ENCODE measurements at regions of chr4 and their contacts with region 1.

Region 1: DNA sequence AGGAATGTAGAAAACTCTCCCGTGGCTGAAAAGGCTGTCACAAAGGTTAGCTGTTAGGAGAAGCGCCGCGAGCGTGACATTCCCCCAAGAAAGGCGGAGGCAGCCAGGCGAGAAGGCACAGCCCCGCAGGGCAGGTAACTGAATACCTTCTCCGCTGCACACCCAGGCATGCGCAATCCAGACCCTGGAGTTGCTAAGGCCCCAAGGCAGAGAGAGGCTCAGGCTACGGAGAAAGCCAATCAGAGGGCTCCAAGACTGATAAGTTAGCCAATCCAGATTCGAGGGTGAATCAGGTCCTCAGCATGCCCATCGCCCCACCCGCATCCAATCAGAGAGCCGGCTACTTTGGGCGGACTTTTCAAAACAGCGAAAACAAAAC is 485 bp upstream of the CCNG2 start:
- DNase-seq: peak; percentile 99
- H3K4me3 ChIP-seq: peak overlapping the region; percentile 87 to 98
- H3K4me3 Mint-ChIP-seq: peak overlapping the region; percentile 92 to 100 (median 98)
- H3K27ac ChIP-seq: peak overlapping the region; percentile 77
- H3K27ac Mint-ChIP-seq: peak overlapping the region; percentile 97 to 99 (median 98)
- H3K4me1 ChIP-seq: peaks cover 35% of the 10 kb centered on the region
- H3K4me1 Mint-ChIP-seq: peaks cover 16 to 54% (median 24%) of the 10 kb centered on the region in 4 donors
- H3K27me3 ChIP-seq: no peaks in the 10 kb centered on the region
- H3K27me3 Mint-ChIP-seq: peaks cover 0 to 6% of the 10 kb centered on the region in 2 donors

Region 2: DNA sequence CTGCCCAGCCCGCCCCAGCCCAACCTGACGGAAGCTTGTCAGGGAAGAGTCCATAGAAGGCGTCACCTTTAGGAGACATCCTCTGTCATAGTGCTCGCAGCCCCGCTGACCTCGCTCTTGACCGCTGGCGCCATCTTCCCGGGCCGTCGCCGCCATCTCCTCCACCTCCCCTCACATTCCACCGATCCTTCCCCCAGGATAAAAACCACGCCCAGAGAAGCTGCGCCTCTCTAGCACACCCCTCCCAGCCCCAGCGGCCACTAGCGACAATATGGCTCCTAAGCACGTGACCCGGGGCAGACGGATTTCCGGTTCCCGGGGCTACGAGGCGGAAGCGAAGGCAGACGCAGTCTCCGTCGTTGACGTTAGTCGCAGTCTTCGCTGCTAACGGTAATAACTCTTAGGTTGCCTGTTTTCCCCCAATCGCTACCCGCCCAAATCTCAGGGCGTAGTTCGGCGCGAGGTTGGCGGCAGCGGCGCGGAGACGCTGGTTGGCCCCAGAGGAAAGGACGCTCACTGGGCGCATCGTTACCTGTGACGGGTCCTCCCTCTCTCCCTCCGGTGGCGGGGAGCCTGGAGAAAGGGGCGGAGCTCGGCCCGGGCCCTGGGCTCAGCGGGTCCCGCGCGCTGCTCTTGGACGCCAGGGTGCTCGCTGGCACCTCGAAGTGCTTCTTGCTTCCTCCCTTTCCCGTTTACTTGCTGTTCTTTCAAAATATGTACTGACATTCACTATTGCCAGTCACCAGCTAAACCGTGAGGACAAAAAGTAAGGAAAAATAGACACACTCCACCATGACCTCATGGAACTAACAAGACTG is 1642.2 kb before region 1 on chr4 and contains the starts of genes RCHY1 and THAP6:
- CTCF ChIA-PET with region 1: no interaction called
- POLR2A ChIA-PET with region 1: interaction called, 3 read pairs
- intact Hi-C with region 1: loop called (anchors 2 kb)
- DNase-seq: peak; percentile 92 to 96 (median 94)
- H3K4me3 ChIP-seq: peak within 1 kb of the TSS; percentile 68 to 99
- H3K4me3 Mint-ChIP-seq: no peak within 1 kb of the TSS
- H3K27ac ChIP-seq: peak within 1 kb of the TSS; percentile 97
- H3K27ac Mint-ChIP-seq: peak within 1 kb of the TSS in 3 of 7 donors; percentile 99 to 100 (median 100)
- H3K4me1 ChIP-seq: peaks cover 74% of the 10 kb centered on the region
- H3K4me1 Mint-ChIP-seq: peaks cover 35 to 51% (median 38%) of the 10 kb centered on the region in 4 donors
- H3K27me3 ChIP-seq: no peaks in the 10 kb centered on the region
- H3K27me3 Mint-ChIP-seq: no peaks in the 10 kb centered on the region
- total RNA-seq, gene RCHY1: 36.6 to 40.9 TPM
- total RNA-seq, gene THAP6: 38.1 to 43.4 TPM

Region 3: GRCh38 chr4:75800972-75801371 is 1355.5 kb before region 1 on chr4:
- CTCF ChIA-PET with region 1: no interaction called
- POLR2A ChIA-PET with region 1: no interaction called
- intact Hi-C with region 1: no loop called
- DNase-seq: no peak
- H3K4me3 ChIP-seq: no peak overlapping the region
- H3K4me3 Mint-ChIP-seq: no peak overlapping the region
- H3K27ac ChIP-seq: no peak overlapping the region
- H3K27ac Mint-ChIP-seq: no peak overlapping the region
- H3K4me1 ChIP-seq: no peaks in the 10 kb centered on the region
- H3K4me1 Mint-ChIP-seq: no peaks in the 10 kb centered on the region
- H3K27me3 ChIP-seq: no peaks in the 10 kb centered on the region
- H3K27me3 Mint-ChIP-seq: no peaks in the 10 kb centered on the region

Region 4: DNA sequence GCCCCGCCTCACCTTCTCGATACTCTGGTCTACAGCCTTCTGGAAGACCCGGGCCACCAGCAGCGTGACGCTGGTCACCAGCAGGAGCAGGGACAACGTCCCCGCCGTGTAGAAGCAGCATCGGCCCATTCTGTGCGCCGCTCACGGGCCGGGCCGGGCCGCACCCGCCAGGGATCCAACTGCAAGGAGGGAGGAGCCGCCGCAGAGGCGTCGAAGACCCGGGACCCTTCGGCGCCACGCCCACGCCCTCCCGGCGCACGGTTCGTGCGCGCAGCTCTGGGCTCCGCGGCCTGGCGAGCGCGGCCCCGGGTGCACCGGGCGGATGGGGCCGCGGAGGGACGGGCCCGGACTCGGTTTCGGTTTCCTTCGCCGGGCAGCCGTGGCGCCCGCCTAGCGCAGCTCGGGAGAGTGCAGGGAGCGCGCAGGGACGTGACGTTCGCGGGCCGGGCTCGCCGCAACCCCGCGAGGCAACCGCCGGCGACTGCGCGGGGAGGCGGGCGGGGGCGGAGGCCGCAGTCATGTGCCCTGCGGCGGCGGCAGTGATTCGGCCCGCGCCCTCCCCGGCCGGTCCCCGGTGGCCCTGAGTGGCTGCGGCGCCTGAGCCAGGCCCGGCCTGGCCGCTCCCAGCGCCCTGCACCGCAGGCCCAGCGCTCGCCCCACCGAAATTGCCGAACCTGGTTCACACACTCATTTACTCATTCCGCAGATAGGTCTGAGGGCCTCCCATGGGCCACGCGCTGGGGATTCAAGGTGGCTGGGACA is 942.9 kb before region 1 on chr4 and contains the start of gene SCARB2:
- CTCF ChIA-PET with region 1: no interaction called
- POLR2A ChIA-PET with region 1: no interaction called
- intact Hi-C with region 1: loop called (anchors 2 kb)
- DNase-seq: peak; percentile 79 to 88 (median 83)
- H3K4me3 ChIP-seq: peak within 1 kb of the TSS; percentile 77 to 90
- H3K4me3 Mint-ChIP-seq: peak within 1 kb of the TSS; percentile 89 to 97 (median 96)
- H3K27ac ChIP-seq: peak within 1 kb of the TSS; percentile 84
- H3K27ac Mint-ChIP-seq: peak within 1 kb of the TSS; percentile 92 to 98 (median 98)
- H3K4me1 ChIP-seq: peaks cover 43% of the 10 kb centered on the region
- H3K4me1 Mint-ChIP-seq: peaks cover 39 to 72% (median 48%) of the 10 kb centered on the region in 4 donors
- H3K27me3 ChIP-seq: no peaks in the 10 kb centered on the region
- H3K27me3 Mint-ChIP-seq: no peaks in the 10 kb centered on the region
- total RNA-seq, gene SCARB2: 23.3 to 23.5 TPM

Region 5: DNA sequence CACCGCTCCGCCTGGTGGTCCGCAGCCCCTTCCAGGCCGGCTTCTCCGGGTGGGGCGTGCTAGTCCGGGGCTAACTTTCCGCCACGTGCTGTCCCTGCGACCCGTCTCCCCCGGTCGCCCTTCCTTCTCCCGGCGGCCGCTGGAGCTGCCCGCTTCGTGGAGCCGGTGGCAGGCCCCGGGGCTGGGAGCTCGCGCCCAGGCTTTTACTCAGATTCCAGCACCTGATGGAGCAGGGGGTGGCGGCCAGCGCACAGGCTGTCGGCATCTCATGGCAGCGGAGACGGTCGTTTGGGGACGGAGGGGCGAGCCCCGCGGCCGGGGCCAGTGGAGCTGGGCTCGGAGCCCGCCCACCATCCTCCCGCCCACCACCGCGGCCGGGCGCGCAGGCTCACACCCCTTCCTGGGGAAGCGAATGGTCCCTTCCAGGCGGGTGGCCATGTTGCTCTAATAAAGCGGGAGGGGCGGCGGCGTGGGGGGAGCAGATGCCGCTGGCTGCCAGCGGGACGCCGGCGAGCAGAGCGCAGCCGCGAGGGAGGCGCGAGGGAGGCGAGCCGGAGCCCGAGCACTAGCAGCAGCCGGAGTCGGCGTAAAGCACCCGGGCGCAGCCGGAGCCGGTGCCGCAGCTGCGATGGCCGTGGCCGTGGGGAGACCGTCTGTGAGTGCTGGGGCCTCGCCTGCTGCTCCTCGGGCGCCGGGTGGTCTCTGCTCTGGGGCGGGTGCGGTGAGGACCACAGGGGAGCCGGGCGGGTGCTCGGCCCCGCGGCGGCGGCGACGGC is 207.1 kb before region 1 on chr4 and contains the start of gene SEPTIN11:
- CTCF ChIA-PET with region 1: no interaction called
- POLR2A ChIA-PET with region 1: no interaction called
- intact Hi-C with region 1: loop called (anchors 1 kb)
- DNase-seq: peak; percentile 83 to 90 (median 85)
- H3K4me3 ChIP-seq: peak within 1 kb of the TSS; percentile 83 to 86
- H3K4me3 Mint-ChIP-seq: peak within 1 kb of the TSS; percentile 90 to 94 (median 93)
- H3K27ac ChIP-seq: peak within 1 kb of the TSS; percentile 59
- H3K27ac Mint-ChIP-seq: peak within 1 kb of the TSS; percentile 79 to 94 (median 91)
- H3K4me1 ChIP-seq: peaks cover 23% of the 10 kb centered on the region
- H3K4me1 Mint-ChIP-seq: peaks cover 8 to 41% (median 23%) of the 10 kb centered on the region in 4 donors
- H3K27me3 ChIP-seq: no peaks in the 10 kb centered on the region
- H3K27me3 Mint-ChIP-seq: no peaks in the 10 kb centered on the region
- total RNA-seq, gene SEPTIN11: 25.2 to 30.2 TPM

Region 6: DNA sequence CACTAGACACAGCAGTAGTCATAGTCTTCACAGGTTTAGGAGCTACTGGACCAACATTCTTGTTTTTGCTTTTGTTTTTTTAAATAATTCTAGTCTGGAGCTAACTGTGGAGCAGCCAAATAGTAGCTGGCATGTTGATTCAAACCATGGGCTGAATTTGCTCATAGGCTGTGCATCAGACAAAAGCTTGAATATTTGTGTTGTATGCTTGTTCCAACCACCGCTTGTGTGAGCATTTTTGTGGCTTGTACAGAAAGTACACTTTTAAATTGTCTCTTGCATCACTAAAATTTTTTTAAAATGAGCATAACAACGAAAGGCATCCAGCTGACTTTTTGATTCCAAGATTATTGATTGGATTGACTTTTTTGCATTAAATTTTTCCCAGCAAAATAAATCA is 120.3 kb before region 1 on chr4:
- CTCF ChIA-PET with region 1: no interaction called
- POLR2A ChIA-PET with region 1: no interaction called
- intact Hi-C with region 1: no loop called
- DNase-seq: no peak
- H3K4me3 ChIP-seq: no peak overlapping the region
- H3K4me3 Mint-ChIP-seq: no peak overlapping the region
- H3K27ac ChIP-seq: no peak overlapping the region
- H3K27ac Mint-ChIP-seq: no peak overlapping the region
- H3K4me1 ChIP-seq: peaks cover 14% of the 10 kb centered on the region
- H3K4me1 Mint-ChIP-seq: peaks cover 14 to 16% (median 15%) of the 10 kb centered on the region in 4 donors
- H3K27me3 ChIP-seq: no peaks in the 10 kb centered on the region
- H3K27me3 Mint-ChIP-seq: no peaks in the 10 kb centered on the region

Region 7: GRCh38 chr4:77095101-77095821 is 61.3 kb before region 1 on chr4:
- CTCF ChIA-PET with region 1: interaction called, 16 read pairs
- POLR2A ChIA-PET with region 1: interaction called, 4 read pairs
- intact Hi-C with region 1: loop called (anchors 1 kb)
- DNase-seq: peak; percentile 58 to 70 (median 64)
- H3K4me3 ChIP-seq: no peak overlapping the region
- H3K4me3 Mint-ChIP-seq: no peak overlapping the region
- H3K27ac ChIP-seq: no peak overlapping the region
- H3K27ac Mint-ChIP-seq: peak overlapping the region in 1 of 7 donors; percentile 5
- H3K4me1 ChIP-seq: peaks cover 11% of the 10 kb centered on the region
- H3K4me1 Mint-ChIP-seq: peaks cover 9 to 19% (median 13%) of the 10 kb centered on the region in 4 donors
- H3K27me3 ChIP-seq: no peaks in the 10 kb centered on the region
- H3K27me3 Mint-ChIP-seq: no peaks in the 10 kb centered on the region

Region 8: DNA sequence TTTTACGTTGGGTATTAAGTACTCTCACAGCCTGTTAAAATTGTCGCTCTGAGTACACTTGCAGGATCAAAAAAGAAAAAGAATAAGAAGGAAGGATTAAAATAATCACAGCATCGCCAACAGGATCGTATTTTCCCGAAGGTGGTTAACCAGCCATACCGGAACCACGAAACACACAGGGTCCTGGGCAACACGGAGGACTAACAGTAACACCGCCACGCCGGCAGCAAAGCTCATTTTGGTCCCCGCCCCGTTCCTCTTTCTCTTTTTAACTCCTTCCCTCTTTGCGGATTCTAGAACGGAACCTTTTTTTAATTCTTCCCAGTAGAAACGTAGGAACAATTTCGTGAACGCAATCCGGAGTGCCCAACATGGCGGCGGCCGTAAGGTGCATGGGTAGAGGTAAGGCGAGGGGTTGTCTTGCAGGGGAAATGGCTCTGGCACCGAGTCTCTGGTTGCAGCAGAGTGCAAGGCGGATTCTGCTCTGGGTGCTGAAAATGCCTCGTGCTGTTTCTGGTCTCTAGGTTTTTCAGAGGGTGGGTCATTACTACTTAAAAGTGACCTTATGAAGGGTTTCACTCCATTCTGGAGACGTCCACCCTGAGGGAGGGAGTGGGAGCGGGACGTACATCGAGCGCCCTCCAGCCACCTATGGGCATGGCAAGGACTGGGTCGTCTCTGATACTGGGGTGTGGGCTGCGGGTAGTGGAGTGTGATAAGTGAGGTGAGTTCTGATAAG is 706.1 kb after region 1 on chr4 and contains the start of gene MRPL1:
- CTCF ChIA-PET with region 1: no interaction called
- POLR2A ChIA-PET with region 1: no interaction called
- intact Hi-C with region 1: loop called (anchors 10 kb)
- DNase-seq: peak; percentile 90 to 95 (median 93)
- H3K4me3 ChIP-seq: peak within 1 kb of the TSS; percentile 74 to 99
- H3K4me3 Mint-ChIP-seq: peak within 1 kb of the TSS; percentile 92 to 98 (median 95)
- H3K27ac ChIP-seq: peak within 1 kb of the TSS; percentile 99
- H3K27ac Mint-ChIP-seq: peak within 1 kb of the TSS; percentile 96 to 100 (median 99)
- H3K4me1 ChIP-seq: peaks cover 56% of the 10 kb centered on the region
- H3K4me1 Mint-ChIP-seq: peaks cover 32 to 70% (median 50%) of the 10 kb centered on the region in 4 donors
- H3K27me3 ChIP-seq: no peaks in the 10 kb centered on the region
- H3K27me3 Mint-ChIP-seq: peaks cover 0 to 7% of the 10 kb centered on the region in 2 donors
- total RNA-seq, gene MRPL1: 18.6 to 23.3 TPM